CD8-positive, alpha-beta T cell (primary cell): ENCODE measurements at regions of chr9 and their contacts with region 1.

Region 1: DNA sequence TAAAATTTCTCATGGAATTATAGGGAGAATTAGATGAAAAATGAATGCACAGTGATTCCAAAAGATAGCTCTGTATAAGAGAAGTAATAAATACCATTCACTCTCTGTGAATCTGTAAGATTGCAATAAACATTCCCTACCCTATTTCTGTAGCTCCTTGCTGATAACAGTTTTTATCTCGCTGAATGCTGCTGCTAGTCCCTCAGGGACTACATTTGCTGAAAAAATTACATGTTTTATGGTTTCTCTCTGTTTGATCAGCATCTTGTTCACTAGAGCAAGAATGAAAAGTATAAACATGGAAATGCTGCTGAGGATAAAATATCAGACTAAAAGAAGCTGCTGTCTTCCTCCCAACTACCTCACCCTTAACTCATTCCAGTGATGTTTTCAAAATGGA is 44.3 kb upstream of the TYRP1 start:
- DNase-seq: no peak
- ATAC-seq: no peak
- H3K4me3 ChIP-seq: no peak overlapping the region
- H3K4me3 Mint-ChIP-seq: no peak overlapping the region
- H3K27ac ChIP-seq: no peak overlapping the region
- H3K27ac Mint-ChIP-seq: no peak overlapping the region
- H3K4me1 ChIP-seq: no peaks in the 10 kb centered on the region
- H3K4me1 Mint-ChIP-seq: no peaks in the 10 kb centered on the region
- H3K27me3 ChIP-seq: no peaks in the 10 kb centered on the region
- H3K27me3 Mint-ChIP-seq: no peaks in the 10 kb centered on the region
- CTCF ChIP-seq: no peak

Region 2: GRCh38 chr9:12595400-12595799 is 53.5 kb before region 1 on chr9:
- CTCF ChIA-PET with region 1: no interaction called
- POLR2A ChIA-PET with region 1: no interaction called
- intact Hi-C with region 1: loop called in 1 of 2 experiments (anchors 5 kb)
- DNase-seq: no peak
- ATAC-seq: no peak
- H3K4me3 ChIP-seq: no peak overlapping the region
- H3K4me3 Mint-ChIP-seq: no peak overlapping the region
- H3K27ac ChIP-seq: no peak overlapping the region
- H3K27ac Mint-ChIP-seq: no peak overlapping the region
- H3K4me1 ChIP-seq: no peaks in the 10 kb centered on the region
- H3K4me1 Mint-ChIP-seq: no peaks in the 10 kb centered on the region
- H3K27me3 ChIP-seq: no peaks in the 10 kb centered on the region
- H3K27me3 Mint-ChIP-seq: no peaks in the 10 kb centered on the region
- CTCF ChIP-seq: no peak